ENCODE measurements at regions of chr9 and their contacts with region 1.

Region 1: DNA sequence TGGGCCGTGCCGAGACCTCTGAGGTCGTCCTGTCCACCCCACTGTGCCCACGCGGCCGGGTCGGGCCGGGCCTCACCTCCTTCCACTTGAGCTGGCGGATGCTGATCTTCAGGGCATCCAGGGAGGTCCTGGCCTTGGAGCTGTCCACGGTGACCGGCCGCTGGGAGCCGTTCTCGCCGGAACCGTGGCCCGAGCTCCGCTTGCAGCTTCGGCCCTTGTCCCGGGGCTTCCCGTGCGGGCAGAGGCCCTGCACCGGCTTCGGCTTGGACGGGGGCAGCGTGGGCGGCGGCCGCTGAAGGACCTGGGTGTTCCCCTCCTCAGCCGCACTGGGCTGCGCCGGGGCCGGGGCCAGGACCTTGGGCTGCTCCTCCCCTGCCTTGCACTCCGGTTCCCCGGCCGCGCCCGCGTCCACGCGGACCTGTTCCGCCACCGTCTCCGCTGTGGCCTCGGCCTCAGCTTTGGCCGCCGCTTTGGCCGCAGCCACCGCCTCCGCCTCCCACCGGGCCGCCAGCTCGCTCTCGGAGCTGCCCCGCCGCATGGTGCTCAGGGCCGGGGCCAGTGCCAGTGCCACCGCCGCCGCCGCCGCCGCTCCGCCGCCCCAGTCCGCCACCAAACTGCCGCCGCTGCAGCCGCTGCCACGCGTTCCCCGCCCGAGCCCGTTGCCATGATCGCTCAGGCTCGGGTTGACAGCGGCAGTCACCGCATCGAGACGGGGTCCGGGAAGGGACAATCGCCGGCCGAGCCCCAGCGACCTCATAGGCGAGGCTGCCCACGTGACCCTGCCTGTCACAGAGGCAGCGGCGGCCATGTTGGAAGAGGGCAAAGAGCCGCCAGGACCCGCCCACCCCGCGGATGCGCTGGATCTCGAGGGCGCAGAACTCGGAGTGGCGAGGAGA is at the start of gene TTLL11:
- DNase-seq: peak; percentile 99
- ATAC-seq: peak; percentile 98
- total RNA-seq, gene TTLL11: 5.0 TPM

Region 2: DNA sequence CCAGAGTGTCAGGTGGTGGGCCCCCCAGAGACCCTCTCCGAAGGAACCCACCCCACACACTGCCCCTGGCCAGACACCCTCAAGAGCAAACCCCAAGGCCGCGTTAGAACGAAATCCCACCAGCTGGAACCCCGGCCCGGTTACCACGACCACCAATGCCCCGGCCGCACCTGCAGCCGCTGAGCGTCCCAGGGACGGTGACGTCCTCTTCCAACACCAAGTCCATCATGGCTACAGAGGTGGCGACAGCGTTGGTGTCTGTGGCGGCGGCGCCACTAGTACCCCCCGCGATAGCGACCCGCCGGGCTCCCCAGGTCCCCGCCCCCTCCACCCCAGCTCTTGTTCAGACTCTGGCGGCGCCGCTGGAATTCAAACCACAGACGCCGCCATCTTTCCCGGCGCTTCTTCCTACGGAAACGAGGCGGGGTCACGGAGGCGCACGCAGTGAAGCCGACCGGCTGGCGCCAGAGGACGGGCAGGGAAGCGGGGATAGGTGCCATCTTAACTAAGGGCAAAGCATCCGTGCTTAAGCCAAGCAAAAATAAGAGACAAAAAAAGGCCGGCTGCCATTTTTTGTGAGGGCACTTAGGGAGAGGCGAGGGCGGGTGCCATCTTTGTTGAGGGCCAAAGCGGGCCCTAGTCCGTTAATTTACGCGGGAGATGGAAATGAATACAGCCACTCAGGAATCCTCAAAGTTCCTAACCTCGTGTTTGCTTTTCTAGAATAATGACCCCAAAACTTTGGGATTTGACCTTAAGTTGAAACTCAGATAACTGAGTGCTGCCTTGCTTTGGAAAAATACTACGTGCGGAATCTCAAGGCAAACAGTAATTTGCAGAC is 1512.9 kb before region 1 on chr9 and contains the start of gene CDK5RAP2:
- intact Hi-C with region 1: loop called (anchors 10 kb)
- DNase-seq: peak; percentile 97
- ATAC-seq: peak; percentile 98
- total RNA-seq, gene CDK5RAP2: 75.4 TPM

Region 3: DNA sequence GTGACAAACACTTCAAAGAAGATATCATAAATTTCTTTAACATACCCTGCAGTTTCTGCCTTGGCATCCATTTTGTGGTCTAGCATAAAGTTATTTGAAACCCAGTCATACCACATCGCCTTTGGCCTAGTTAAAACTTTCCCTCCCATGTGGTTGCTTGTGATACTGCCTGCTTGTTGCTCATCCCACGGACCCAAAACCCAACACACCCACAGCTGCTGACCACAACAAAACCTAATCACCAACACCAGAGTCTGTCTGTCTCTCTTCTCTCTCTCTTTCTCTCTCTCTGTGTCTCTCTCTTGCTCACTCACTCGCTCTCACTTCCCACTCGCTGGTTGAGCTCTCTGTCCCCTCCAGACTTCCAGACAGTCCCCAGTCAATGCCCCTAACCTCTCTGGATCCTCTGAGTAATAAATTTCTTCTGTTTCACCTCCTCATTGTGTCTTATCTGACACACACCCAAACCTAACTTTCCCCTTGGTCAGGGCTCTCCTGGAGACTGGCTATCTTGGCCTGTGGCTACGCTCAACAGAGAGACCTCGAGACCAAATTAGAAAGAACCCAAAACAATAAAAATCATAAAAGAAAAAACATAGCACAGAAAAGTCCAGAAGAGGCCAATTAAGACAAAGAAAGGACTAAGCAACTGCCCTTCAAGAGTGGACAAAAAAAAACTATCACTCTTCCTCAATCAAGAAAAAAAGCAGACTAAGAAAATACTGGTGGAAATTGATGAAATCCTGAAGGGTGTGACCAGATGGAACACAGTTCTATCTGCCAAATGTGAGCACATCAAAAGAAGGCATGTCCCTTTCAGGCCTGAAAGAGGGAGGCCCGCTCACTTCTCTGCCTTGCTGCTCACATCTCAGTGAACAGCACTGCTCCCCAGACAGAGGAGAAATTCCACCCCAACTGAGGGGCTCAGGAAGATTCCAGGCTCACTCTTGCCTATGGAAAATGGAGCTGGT is 41.2 kb before region 1 on chr9:
- intact Hi-C with region 1: no loop called
- DNase-seq: no peak
- ATAC-seq: no peak

Region 4: DNA sequence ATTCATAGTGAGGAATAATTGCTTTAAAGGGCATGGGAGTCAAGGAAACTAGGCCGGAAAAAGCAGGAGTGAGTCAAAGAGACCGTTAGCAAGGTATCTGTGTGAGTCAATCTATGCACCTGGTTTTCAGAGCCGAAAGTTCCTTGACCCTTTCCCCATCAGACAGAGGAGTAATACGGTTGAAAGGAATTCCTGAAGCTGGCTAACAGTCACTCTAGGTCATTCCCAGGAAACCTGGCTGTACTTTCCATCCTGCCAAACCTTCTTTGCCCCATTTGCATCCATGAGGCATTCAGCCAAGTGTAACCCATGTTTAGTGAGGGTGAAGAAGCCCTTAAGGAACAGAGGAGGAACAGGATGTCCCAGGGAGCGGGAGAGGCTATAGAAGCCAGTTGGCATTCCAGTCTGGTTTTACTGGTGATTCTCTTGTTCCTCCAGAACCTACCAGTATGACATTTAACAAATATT is 155.6 kb after region 1 on chr9:
- intact Hi-C with region 1: no loop called
- DNase-seq: no peak
- ATAC-seq: no peak

Region 5: DNA sequence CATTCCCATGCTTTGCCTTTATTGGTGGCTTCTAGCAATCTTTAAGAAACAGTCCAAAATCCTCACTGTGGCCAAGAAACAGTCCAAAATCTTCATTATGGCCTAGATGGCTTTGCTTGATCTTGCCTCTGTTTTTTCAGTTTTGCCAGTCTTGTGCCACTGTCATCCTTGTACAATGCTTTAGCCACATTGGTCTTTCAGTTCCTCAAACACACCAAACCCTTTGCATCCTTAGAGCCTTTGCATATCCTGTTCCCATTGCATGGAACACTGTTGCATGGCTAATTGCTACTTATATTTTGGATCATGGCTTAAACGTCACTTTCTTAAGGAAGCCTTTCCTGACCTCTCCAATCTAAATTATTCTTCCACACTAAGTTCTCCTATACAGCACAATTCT is 193.9 kb after region 1 on chr9:
- intact Hi-C with region 1: no loop called
- DNase-seq: no peak
- ATAC-seq: no peak